ENCODE measurements at regions of chr14 and their contacts with region 1.

Region 1: DNA sequence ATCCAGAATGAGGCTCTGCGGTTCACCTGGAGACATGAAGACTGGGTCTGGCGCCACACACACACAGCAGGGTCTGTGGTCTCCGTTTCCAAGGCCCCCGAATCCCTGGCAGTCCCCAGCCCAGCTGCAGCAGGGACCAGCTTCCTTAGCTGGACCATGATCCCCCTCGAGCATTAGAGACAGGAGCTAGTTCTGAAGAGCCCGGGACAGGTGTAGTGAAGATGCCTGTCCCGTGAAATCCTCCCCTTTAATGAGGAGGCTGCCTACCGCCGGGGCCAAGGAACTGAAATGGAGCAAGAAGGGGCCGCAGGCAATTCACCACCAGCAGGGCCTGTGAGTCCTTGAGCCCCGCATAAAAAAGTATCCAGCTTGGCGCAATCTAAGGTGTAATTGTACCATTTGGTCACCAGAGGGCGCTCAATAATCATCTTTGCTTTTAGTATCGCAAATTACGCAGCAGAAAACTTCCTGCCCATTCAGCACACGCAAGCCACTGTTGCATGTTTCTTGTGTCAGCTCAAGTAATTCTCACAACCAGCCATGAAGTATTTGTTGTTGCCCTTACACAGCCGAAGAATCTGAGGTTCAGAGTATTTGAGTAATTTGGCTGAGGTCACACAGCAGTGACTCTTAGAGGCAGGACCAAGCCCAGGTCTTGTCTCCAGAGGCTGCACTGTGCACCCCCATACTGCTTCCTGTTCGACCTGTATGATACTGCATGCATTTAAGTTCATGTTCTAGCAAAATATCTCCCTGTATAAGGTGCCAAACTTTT is 54.3 kb upstream of the PPP2R5C start:
- DNase-seq: peak in 4 of 5 donors; percentile 49 to 79 (median 76)
- H3K4me3 ChIP-seq: peak overlapping the region; percentile 24
- H3K4me3 Mint-ChIP-seq: peak overlapping the region; percentile 28 to 85 (median 68)
- H3K27ac ChIP-seq: peak overlapping the region; percentile 29
- H3K27ac Mint-ChIP-seq: peak overlapping the region; percentile 65 to 97 (median 92)
- H3K4me1 ChIP-seq: peaks cover 39% of the 10 kb centered on the region
- H3K4me1 Mint-ChIP-seq: peaks cover 40 to 63% (median 52%) of the 10 kb centered on the region in 3 donors
- H3K27me3 ChIP-seq: no peaks in the 10 kb centered on the region
- H3K27me3 Mint-ChIP-seq: no peaks in the 10 kb centered on the region

Region 2: DNA sequence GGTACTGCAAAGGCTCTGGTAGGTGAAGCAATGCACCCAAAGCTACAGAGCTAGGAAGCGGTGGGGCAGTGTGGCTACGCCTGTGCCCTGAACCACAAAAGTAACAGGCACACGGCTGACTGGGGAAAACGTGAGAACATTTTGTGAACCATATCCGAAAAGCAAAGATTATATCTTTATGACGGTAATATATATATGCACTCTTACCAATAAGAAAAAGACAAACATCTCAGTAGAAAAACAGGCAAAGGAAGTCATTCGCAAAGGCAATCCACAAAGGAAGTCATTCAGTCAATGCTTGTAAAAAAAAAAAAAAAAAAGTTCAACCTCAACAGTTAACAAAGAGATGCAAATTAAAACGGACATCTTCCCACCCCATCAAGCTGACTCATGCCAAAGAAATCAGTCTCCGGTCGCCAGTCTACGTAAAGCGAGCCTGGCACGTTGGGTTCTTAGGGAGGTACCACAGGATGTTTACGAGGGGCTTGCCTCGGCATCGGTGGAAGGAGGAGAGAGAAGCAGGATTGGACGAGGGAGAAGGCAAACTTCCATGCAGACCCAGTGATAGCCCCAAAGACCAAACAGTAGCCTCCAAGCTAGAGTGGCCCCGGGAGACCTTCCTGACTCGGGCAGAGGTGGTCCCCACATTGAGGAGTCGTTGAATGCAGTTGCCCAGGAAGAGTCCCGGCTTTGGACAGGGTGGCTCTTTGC is 14.9 kb after region 1 on chr14:
- CTCF ChIA-PET with region 1: interaction called, 29 read pairs
- POLR2A ChIA-PET with region 1: interaction called, 24 read pairs
- DNase-seq: peak; percentile 70 to 93 (median 89)
- H3K4me3 ChIP-seq: peak overlapping the region; percentile 42
- H3K4me3 Mint-ChIP-seq: peak overlapping the region; percentile 64 to 87 (median 78)
- H3K27ac ChIP-seq: peak overlapping the region; percentile 88
- H3K27ac Mint-ChIP-seq: peak overlapping the region; percentile 95 to 99 (median 97)
- H3K4me1 ChIP-seq: peaks cover 56% of the 10 kb centered on the region
- H3K4me1 Mint-ChIP-seq: peaks cover 52 to 79% (median 77%) of the 10 kb centered on the region in 3 donors
- H3K27me3 ChIP-seq: no peaks in the 10 kb centered on the region
- H3K27me3 Mint-ChIP-seq: peaks cover 0 to 2% of the 10 kb centered on the region in 2 donors

Region 3: GRCh38 chr14:101761032-101761880 is 54.0 kb after region 1 on chr14 and contains the start of gene PPP2R5C:
- CTCF ChIA-PET with region 1: interaction called, 15 read pairs
- POLR2A ChIA-PET with region 1: interaction called, 13 read pairs
- DNase-seq: peak; percentile 85 to 93 (median 87)
- H3K4me3 ChIP-seq: peak within 1 kb of the TSS; percentile 93
- H3K4me3 Mint-ChIP-seq: peak within 1 kb of the TSS; percentile 92 to 100 (median 97)
- H3K27ac ChIP-seq: peak within 1 kb of the TSS; percentile 75
- H3K27ac Mint-ChIP-seq: peak within 1 kb of the TSS; percentile 87 to 98 (median 96)
- H3K4me1 ChIP-seq: peaks cover 34% of the 10 kb centered on the region
- H3K4me1 Mint-ChIP-seq: peaks cover 38 to 64% (median 44%) of the 10 kb centered on the region in 3 donors
- H3K27me3 ChIP-seq: no peaks in the 10 kb centered on the region
- H3K27me3 Mint-ChIP-seq: peaks cover 0 to 4% of the 10 kb centered on the region in 2 donors
- total RNA-seq, gene PPP2R5C: 278 to 307 TPM

Region 4: DNA sequence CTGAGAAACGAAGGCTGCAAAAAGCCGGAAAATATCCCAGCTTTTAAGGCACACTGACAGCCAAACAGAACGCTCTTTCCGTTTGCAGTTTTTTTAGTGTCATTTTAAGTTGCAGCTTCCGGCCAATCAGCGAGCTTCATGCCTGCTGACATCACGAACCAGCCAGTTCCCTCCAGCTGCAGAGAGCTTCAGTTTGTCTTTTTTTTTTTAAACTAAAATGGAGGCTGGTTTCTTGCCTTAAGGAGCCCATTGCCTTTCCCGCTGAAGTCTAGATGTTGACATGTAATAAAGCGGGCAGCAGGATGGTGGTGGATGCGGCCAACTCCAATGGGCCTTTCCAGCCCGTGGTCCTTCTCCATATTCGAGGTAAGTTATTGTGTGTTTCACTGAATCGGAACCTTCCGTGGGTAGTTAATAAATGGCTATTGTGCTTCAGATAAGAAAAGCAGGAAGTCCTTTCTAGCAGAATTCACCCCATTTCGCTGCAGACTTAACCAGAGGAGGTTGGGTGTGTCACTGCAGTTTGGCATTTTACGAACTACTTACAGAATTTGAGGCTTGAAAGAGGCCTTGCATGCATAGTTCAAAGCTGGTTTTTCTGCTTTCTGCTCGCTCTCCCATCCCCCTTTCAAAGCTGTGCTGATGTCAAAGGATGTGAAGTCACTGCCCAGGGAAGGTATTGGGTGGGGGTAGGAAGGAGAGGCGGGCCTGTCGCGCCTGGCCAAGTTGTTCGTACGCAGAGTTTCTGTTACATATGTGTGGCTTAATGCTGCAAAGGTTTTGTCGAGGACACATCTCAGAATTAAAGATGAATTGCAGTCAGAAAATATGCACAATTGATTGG is 102.6 kb after region 1 on chr14:
- CTCF ChIA-PET with region 1: interaction called, 12 read pairs
- POLR2A ChIA-PET with region 1: interaction called, 25 read pairs
- DNase-seq: peak; percentile 71 to 94 (median 92)
- H3K4me3 ChIP-seq: peak overlapping the region; percentile 94
- H3K4me3 Mint-ChIP-seq: peak overlapping the region; percentile 90 to 99 (median 95)
- H3K27ac ChIP-seq: peak overlapping the region; percentile 99
- H3K27ac Mint-ChIP-seq: peak overlapping the region; percentile 89 to 100 (median 98)
- H3K4me1 ChIP-seq: peaks cover 36% of the 10 kb centered on the region
- H3K4me1 Mint-ChIP-seq: peaks cover 45 to 71% (median 58%) of the 10 kb centered on the region in 3 donors
- H3K27me3 ChIP-seq: no peaks in the 10 kb centered on the region
- H3K27me3 Mint-ChIP-seq: peaks cover 0 to 2% of the 10 kb centered on the region in 2 donors

Region 5: DNA sequence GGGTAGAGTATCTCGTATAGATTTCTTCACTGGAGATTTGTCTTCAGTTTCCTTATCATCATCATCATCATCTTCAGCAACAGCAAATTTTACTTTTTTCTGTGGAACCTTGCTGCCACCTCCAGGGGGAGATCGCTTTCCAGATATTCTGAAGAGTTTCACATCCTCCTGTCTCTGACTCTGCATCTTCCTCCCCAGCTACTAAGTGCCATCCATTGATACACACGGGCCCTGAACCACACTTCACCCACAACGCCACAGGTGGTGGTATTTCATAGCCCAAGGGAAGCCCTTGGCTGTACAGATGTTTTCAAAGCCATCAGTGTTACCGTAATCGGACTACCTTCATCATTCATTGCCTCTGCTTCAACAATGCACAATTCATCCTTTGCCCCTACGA is 136.4 kb after region 1 on chr14:
- CTCF ChIA-PET with region 1: interaction called, 13 read pairs
- POLR2A ChIA-PET with region 1: interaction called, 4 read pairs
- DNase-seq: peak; percentile 48 to 69 (median 57)
- H3K4me3 ChIP-seq: no peak overlapping the region
- H3K4me3 Mint-ChIP-seq: peak overlapping the region; percentile 0 to 84 (median 54)
- H3K27ac ChIP-seq: no peak overlapping the region
- H3K27ac Mint-ChIP-seq: peak overlapping the region; percentile 50 to 96 (median 85)
- H3K4me1 ChIP-seq: peaks cover 88% of the 10 kb centered on the region
- H3K4me1 Mint-ChIP-seq: peaks cover 81 to 99% (median 93%) of the 10 kb centered on the region in 3 donors
- H3K27me3 ChIP-seq: no peaks in the 10 kb centered on the region
- H3K27me3 Mint-ChIP-seq: peaks cover 0 to 2% of the 10 kb centered on the region in 2 donors